B cell (primary cell): ENCODE measurements at regions of chr15 and their contacts with region 1.

Region 1: GRCh38 chr15:70097337-70098169 is at the start of gene TLE3:
- DNase-seq: peak; percentile 99
- ATAC-seq: peak; percentile 53
- H3K4me3 ChIP-seq: peak within 1 kb of the TSS; percentile 82 to 97 (median 92)
- H3K4me3 Mint-ChIP-seq: peak within 1 kb of the TSS; percentile 98
- H3K27ac ChIP-seq: peak within 1 kb of the TSS; percentile 79 to 87
- H3K27ac Mint-ChIP-seq: peak within 1 kb of the TSS; percentile 97
- H3K4me1 ChIP-seq: peaks cover 57 to 68% of the 10 kb centered on the region in 2 donors
- H3K4me1 Mint-ChIP-seq: peaks cover 65% of the 10 kb centered on the region
- H3K27me3 ChIP-seq: peaks cover 0 to 20% (median 10%) of the 10 kb centered on the region in 4 experiments
- H3K27me3 Mint-ChIP-seq: peaks cover under 1% of the 10 kb centered on the region
- CTCF ChIP-seq: peak; percentile 56
- total RNA-seq, gene TLE3: 261 and 278 TPM in 2 replicates

Region 2: DNA sequence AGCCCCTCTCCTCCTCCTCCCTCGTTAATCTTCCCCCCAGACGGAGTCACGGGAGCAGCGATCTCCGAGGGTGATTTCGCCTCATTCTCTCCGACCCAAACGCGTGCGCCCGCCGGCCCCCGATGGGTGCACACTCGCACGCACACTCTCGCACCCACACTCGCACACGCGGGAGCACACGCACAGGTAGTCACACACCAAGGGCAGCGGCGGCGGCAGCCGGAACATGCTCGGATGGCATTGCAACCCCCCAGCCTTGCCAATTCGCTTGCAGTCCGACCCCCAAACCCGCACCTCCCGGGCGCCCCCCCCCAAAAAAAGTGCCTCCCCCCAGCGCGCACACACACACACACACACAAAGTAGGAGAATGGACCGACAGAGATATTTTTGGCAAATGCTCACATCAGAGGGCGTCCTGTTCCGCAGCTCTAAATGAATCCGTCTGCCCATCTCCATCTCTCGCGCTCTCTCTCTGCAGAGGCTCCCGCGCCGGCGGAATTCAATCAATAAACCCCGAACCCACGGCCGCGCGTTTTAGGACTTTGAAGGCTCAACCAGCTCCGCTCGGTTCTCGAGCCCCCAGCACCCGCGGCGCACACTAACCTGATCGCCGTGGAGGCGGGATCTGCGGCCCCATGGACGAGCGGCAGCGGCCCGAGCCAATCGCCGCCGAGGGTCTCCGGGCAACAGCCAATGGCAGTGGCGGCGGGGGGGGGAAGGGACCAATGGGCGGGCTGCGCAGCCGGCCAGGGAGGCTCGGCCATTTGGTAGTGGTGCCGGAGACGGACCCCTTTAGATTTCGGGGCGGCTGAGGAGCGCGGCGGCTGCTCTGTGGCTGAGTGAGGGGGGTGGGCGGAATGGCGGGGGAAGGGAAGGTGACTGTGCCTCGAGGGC is 1277.0 kb before region 1 on chr15 and contains the start of gene ANP32A:
- CTCF ChIA-PET with region 1: no interaction called
- POLR2A ChIA-PET with region 1: no interaction called
- intact Hi-C with region 1: loop called (anchors 5 kb)
- DNase-seq: peak; percentile 98
- ATAC-seq: peak; percentile 71
- H3K4me3 ChIP-seq: peak within 1 kb of the TSS; percentile 71 to 98 (median 94)
- H3K4me3 Mint-ChIP-seq: peak within 1 kb of the TSS; percentile 96
- H3K27ac ChIP-seq: peak within 1 kb of the TSS; percentile 90 to 93
- H3K27ac Mint-ChIP-seq: peak within 1 kb of the TSS; percentile 98
- H3K4me1 ChIP-seq: peaks cover 21 to 22% of the 10 kb centered on the region in 2 donors
- H3K4me1 Mint-ChIP-seq: peaks cover 27% of the 10 kb centered on the region
- H3K27me3 ChIP-seq: no peaks in the 10 kb centered on the region
- H3K27me3 Mint-ChIP-seq: no peaks in the 10 kb centered on the region
- CTCF ChIP-seq: no peak
- total RNA-seq, gene ANP32A: 153 and 163 TPM in 2 replicates

Region 3: DNA sequence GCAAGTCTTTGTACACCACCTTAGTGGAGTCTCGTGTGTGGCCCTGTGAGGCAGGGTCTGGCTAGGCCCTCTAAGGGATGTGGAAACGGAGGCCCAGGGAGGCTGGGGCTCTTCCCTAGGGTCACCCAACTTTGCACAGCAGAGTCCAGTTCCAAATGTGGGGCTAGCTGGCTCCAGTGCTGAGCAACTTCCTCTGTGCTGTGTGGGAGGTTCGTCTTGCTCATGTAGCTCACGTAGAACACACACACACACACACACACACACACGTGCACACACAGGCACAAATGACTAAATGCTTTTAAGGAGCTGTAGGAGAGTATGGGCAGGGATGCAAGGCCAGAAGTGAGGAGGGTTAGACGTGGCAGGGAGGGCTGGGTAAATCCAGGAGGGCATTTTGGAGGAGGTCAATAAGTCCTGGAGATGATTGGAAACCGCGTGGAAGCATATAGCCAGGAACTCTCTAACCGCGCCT is 431.1 kb before region 1 on chr15:
- CTCF ChIA-PET with region 1: no interaction called
- POLR2A ChIA-PET with region 1: interaction called, 3 read pairs
- intact Hi-C with region 1: loop called (anchors 5 kb)
- DNase-seq: peak; percentile 67
- ATAC-seq: peak; percentile 37
- H3K4me3 ChIP-seq: peak overlapping the region in 3 of 5 experiments; percentile 22 to 48 (median 30)
- H3K4me3 Mint-ChIP-seq: peak overlapping the region; percentile 79
- H3K27ac ChIP-seq: peak overlapping the region in 1 of 2 donors; percentile 54
- H3K27ac Mint-ChIP-seq: peak overlapping the region; percentile 80
- H3K4me1 ChIP-seq: peaks cover 44 to 55% of the 10 kb centered on the region in 2 donors
- H3K4me1 Mint-ChIP-seq: peaks cover 49% of the 10 kb centered on the region
- H3K27me3 ChIP-seq: peaks cover 0 to 7% (median 2%) of the 10 kb centered on the region in 4 experiments
- H3K27me3 Mint-ChIP-seq: peaks cover 8% of the 10 kb centered on the region
- CTCF ChIP-seq: no peak

Region 4: DNA sequence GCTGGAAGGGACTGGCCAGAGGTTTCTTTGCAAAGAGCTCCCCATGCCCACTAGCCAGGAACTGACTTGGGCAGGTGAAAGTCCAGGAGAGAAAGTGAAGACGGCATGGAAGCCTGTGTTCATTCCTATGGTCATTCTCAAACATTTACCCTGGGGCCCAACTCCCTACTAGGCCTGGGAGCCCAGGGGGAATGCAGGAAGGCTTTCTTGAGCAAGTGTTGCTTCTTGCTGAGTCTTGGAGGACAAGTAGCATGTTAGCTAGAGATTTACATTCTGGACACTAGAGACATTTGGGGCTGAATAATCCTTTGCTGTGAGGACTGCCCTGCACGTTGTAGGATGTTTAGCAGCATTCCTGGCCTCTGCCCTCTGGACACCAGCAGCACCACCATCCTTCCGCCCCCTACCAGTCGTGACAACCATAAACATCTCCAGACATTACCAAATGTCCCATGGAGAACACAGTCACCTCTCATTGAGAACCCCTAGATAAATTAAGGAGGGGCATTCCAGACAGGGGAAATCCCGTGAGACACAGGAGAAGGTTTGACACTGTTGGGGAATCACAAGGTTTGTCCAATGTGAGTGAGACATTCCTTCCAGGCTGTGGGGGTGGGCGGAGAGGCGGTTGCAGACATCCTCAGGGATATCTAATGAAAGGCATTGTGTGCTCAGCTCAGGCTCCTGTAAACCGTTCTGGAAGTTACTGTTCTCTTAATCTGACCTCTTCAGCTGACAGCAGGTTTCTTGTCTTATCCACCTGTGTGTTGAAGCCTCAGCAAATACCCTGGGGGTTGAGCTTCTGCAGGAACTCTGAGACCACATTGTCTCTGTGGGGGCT is 236.0 kb before region 1 on chr15:
- CTCF ChIA-PET with region 1: no interaction called
- POLR2A ChIA-PET with region 1: no interaction called
- intact Hi-C with region 1: no loop called
- DNase-seq: no peak
- ATAC-seq: no peak
- H3K4me3 ChIP-seq: no peak overlapping the region
- H3K4me3 Mint-ChIP-seq: no peak overlapping the region
- H3K27ac ChIP-seq: no peak overlapping the region
- H3K27ac Mint-ChIP-seq: no peak overlapping the region
- H3K4me1 ChIP-seq: peaks cover 14 to 19% of the 10 kb centered on the region in 2 donors
- H3K4me1 Mint-ChIP-seq: peaks cover 16% of the 10 kb centered on the region
- H3K27me3 ChIP-seq: peaks cover 0 to 11% (median 2%) of the 10 kb centered on the region in 4 experiments
- H3K27me3 Mint-ChIP-seq: peaks cover 27% of the 10 kb centered on the region
- CTCF ChIP-seq: no peak

Region 5: GRCh38 chr15:69881766-69882165 is 215.8 kb before region 1 on chr15:
- CTCF ChIA-PET with region 1: interaction called, 5 read pairs
- POLR2A ChIA-PET with region 1: interaction called, 9 read pairs
- intact Hi-C with region 1: loop called (anchors 1 kb)
- DNase-seq: peak; percentile 88
- ATAC-seq: peak; percentile 91
- H3K4me3 ChIP-seq: no peak overlapping the region
- H3K4me3 Mint-ChIP-seq: peak overlapping the region; percentile 82
- H3K27ac ChIP-seq: no peak overlapping the region
- H3K27ac Mint-ChIP-seq: peak overlapping the region; percentile 92
- H3K4me1 ChIP-seq: peaks cover 22 to 35% of the 10 kb centered on the region in 2 donors
- H3K4me1 Mint-ChIP-seq: peaks cover 42% of the 10 kb centered on the region
- H3K27me3 ChIP-seq: peaks cover 0 to 18% (median 0%) of the 10 kb centered on the region in 4 experiments
- H3K27me3 Mint-ChIP-seq: no peaks in the 10 kb centered on the region
- CTCF ChIP-seq: no peak

Region 6: GRCh38 chr15:69903470-69904469 is 193.8 kb before region 1 on chr15:
- CTCF ChIA-PET with region 1: no interaction called
- POLR2A ChIA-PET with region 1: no interaction called
- intact Hi-C with region 1: no loop called
- DNase-seq: no peak
- ATAC-seq: no peak
- H3K4me3 ChIP-seq: no peak overlapping the region
- H3K4me3 Mint-ChIP-seq: no peak overlapping the region
- H3K27ac ChIP-seq: no peak overlapping the region
- H3K27ac Mint-ChIP-seq: no peak overlapping the region
- H3K4me1 ChIP-seq: no peaks in the 10 kb centered on the region
- H3K4me1 Mint-ChIP-seq: no peaks in the 10 kb centered on the region
- H3K27me3 ChIP-seq: peaks cover 0 to 3% (median 0%) of the 10 kb centered on the region in 4 experiments
- H3K27me3 Mint-ChIP-seq: no peaks in the 10 kb centered on the region
- CTCF ChIP-seq: no peak

Region 7: GRCh38 chr15:70086636-70087035 is 10.9 kb before region 1 on chr15:
- CTCF ChIA-PET with region 1: interaction called, 8 read pairs
- POLR2A ChIA-PET with region 1: interaction called, 4 read pairs
- intact Hi-C with region 1: loop called (anchors 1 kb)
- DNase-seq: peak; percentile 62
- ATAC-seq: peak; percentile 68
- H3K4me3 ChIP-seq: no peak overlapping the region
- H3K4me3 Mint-ChIP-seq: peak overlapping the region; percentile 56
- H3K27ac ChIP-seq: peak overlapping the region in 1 of 2 donors; percentile 44
- H3K27ac Mint-ChIP-seq: peak overlapping the region; percentile 67
- H3K4me1 ChIP-seq: peaks cover 40 to 62% of the 10 kb centered on the region in 2 donors
- H3K4me1 Mint-ChIP-seq: peaks cover 79% of the 10 kb centered on the region
- H3K27me3 ChIP-seq: no peaks in the 10 kb centered on the region
- H3K27me3 Mint-ChIP-seq: no peaks in the 10 kb centered on the region
- CTCF ChIP-seq: no peak

Region 8: GRCh38 chr15:70259028-70259424 is 161.5 kb after region 1 on chr15:
- CTCF ChIA-PET with region 1: no interaction called
- POLR2A ChIA-PET with region 1: interaction called, 7 read pairs
- intact Hi-C with region 1: loop called (anchors 2 kb)
- DNase-seq: peak; percentile 79
- ATAC-seq: peak; percentile 41
- H3K4me3 ChIP-seq: peak overlapping the region in 4 of 5 experiments; percentile 11 to 36 (median 26)
- H3K4me3 Mint-ChIP-seq: peak overlapping the region; percentile 81
- H3K27ac ChIP-seq: peak overlapping the region; percentile 16 to 53
- H3K27ac Mint-ChIP-seq: peak overlapping the region; percentile 85
- H3K4me1 ChIP-seq: peaks cover 54 to 63% of the 10 kb centered on the region in 2 donors
- H3K4me1 Mint-ChIP-seq: peaks cover 63% of the 10 kb centered on the region
- H3K27me3 ChIP-seq: no peaks in the 10 kb centered on the region
- H3K27me3 Mint-ChIP-seq: no peaks in the 10 kb centered on the region
- CTCF ChIP-seq: no peak

Region 9: GRCh38 chr15:70528270-70528706 is 430.7 kb after region 1 on chr15:
- CTCF ChIA-PET with region 1: no interaction called
- POLR2A ChIA-PET with region 1: interaction called, 3 read pairs
- intact Hi-C with region 1: loop called (anchors 2 kb)
- DNase-seq: peak; percentile 77
- ATAC-seq: peak; percentile 61
- H3K4me3 ChIP-seq: peak overlapping the region in 2 of 5 experiments; percentile 10 to 51
- H3K4me3 Mint-ChIP-seq: peak overlapping the region; percentile 70
- H3K27ac ChIP-seq: peak overlapping the region; percentile 54 to 78
- H3K27ac Mint-ChIP-seq: peak overlapping the region; percentile 88
- H3K4me1 ChIP-seq: peaks cover 36 to 42% of the 10 kb centered on the region in 2 donors
- H3K4me1 Mint-ChIP-seq: peaks cover 49% of the 10 kb centered on the region
- H3K27me3 ChIP-seq: peaks cover 0 to under 1% (median 0%) of the 10 kb centered on the region in 4 experiments
- H3K27me3 Mint-ChIP-seq: peaks cover 7% of the 10 kb centered on the region
- CTCF ChIP-seq: no peak